Activated T-helper 1 cell treated with anti-CD3 and anti-CD28 coated beads, Interleukin-12 subunit alpha, Interleukin-12 subunit beta, Interleukin-2, Interleukin-4 antibody, amounts not matched to agents 30 ng/mL and 10 ng/mL and 1 ng/mL, durations not matched to agents 14 hours and 24 hours and 36 hours (primary cell): ENCODE measurements at regions of chr4 and their contacts with region 1.

Region 1: DNA sequence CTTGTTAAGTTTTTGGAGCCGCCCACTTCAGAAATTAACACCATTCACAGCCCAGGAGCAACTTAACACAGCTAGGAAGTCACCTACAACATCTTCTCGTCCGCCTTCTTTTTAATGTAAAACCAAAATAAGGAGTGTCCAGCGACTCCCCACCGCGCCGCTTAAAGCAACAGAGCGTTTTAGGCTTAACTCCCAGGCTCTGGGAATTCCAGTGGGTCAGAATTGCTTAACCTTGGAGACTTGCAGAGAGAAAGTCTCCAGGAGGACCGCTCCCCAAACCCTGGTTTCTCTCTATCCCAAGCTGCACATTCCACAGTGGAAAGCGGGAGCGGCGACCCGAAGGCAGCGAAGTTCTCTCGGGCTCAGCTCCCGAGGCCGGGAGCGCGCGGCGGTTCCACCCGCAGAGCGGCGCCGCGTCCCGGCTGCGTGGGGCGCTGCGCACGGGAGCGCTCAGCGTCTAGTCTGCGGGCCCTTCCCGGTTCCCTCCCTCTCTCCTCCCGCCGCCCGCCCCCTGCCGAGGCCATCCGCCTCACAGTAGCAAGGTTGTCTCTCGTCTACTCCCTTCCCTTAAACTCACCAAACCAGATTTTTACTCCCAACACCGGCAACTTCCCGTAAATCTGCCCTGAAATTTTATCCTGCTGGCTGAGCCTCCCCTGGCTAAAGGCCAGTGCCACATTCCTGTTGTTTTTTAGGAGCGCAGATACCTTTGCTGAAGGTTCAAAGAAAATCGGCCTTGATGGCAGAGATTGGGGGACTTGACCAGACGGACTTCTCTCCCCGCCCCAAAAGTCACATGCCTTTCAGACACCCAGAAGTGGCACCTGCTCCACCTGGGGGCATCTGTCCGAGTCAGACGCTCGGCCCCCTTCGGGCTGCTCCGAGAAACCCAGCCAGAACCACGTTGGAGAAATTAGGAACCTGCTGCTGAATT is at the start of gene RBM47:
- DNase-seq: peak; percentile 12
- H3K4me3 Mint-ChIP-seq: peak within 1 kb of the TSS; percentile 92
- H3K27ac Mint-ChIP-seq: peak within 1 kb of the TSS; percentile 84
- H3K4me1 Mint-ChIP-seq: peaks cover 41% of the 10 kb centered on the region
- H3K27me3 Mint-ChIP-seq: peaks cover 2% of the 10 kb centered on the region
- total RNA-seq, gene RBM47: 20.3 and 21.4 TPM in 2 replicates

Region 2: DNA sequence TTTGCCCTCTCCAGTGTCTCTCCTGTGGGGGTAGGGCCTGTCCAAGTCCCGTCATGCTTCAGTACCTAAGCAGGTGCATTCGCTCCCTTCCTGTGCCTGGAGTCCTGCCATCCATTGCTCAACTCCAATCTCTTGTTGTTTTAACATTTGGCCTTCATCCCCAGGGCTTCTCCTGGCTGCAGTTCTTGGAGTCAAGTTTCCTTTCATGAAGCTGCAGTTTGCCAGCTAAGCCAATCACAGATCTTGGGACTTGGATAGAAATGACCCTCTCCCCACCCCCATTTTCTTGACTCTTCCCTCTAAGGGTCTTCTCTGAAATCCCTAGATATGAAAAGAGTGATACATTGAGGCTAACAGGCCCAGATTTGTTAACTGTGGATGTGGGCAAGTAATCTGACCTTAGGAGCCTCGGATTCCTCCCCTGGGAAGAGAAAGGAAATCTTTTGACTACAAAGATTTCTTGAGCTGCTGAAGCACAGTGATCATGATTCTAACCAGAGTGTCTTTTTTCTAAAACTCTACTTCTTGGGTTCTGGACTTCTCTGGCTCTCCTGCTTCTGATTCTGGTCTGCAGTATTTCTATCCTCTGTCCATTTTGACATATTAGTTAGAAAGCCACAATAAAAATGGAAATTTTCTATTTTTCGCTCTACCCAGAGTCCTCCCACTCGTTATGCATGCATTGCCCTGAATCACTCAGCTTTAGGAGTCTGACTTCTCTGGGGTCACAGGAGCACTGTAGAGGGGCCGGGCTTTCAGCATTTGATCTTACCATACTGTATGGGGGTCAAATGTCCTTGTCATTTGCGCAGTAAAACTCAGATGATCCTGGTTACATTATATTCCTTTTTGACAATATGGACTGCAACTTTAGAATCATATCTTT is 233.5 kb before region 1 on chr4:
- intact Hi-C with region 1: no loop called
- DNase-seq: no peak
- H3K4me3 Mint-ChIP-seq: no peak overlapping the region
- H3K27ac Mint-ChIP-seq: no peak overlapping the region
- H3K4me1 Mint-ChIP-seq: no peaks in the 10 kb centered on the region
- H3K27me3 Mint-ChIP-seq: peaks cover 9% of the 10 kb centered on the region

Region 3: DNA sequence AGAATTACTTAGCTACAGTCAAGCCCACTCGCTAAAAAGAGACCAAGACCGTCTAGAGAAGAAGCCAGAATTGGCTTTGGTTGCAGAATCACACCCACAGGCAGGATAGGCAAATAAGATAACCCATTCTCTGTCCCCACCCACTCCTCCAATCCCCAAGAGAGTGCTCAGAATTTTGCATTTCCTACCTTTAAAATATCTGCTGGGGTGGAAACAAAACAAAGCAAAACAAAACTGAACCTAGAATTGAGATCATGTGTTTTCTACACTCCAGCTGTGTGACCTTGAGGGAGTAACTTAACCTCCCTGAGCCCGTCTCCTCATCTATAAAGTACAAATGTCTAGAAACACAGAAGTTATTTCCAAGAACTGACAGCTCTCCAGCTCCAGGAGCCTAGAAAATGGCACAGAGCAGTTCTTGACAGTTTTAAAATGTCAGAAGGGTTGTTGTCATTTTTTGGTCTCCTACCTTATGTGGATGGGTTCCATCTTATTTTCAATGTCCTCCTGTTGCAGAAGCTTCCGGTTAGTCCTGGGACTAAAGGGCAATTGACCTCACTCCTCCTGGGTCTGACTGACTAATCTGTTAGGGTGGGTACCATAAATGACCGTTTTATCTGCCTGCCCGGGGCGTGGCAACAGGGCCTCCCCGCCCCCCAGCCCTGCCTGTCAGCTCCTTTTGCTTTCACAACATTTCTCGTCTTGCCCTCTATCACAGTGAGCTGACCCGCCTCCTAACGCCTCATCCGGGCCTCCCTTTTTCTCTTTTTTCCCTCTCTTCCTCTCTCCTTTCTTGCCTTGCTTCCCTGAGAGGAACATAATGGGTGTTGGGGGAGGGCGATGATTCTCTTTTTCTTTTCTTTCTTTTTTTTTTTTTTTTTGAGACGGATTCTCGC is 114.0 kb before region 1 on chr4:
- intact Hi-C with region 1: loop called (anchors 5 kb)
- DNase-seq: no peak
- H3K4me3 Mint-ChIP-seq: no peak overlapping the region
- H3K27ac Mint-ChIP-seq: peak overlapping the region; percentile 74
- H3K4me1 Mint-ChIP-seq: peaks cover 42% of the 10 kb centered on the region
- H3K27me3 Mint-ChIP-seq: peaks cover 3% of the 10 kb centered on the region

Region 4: GRCh38 chr4:40576631-40577480 is 52.8 kb before region 1 on chr4:
- intact Hi-C with region 1: loop called (anchors 1 kb)
- DNase-seq: no peak
- H3K4me3 Mint-ChIP-seq: peak overlapping the region; percentile 35
- H3K27ac Mint-ChIP-seq: peak overlapping the region; percentile 74
- H3K4me1 Mint-ChIP-seq: peaks cover 57% of the 10 kb centered on the region
- H3K27me3 Mint-ChIP-seq: peaks cover 2% of the 10 kb centered on the region

Region 5: DNA sequence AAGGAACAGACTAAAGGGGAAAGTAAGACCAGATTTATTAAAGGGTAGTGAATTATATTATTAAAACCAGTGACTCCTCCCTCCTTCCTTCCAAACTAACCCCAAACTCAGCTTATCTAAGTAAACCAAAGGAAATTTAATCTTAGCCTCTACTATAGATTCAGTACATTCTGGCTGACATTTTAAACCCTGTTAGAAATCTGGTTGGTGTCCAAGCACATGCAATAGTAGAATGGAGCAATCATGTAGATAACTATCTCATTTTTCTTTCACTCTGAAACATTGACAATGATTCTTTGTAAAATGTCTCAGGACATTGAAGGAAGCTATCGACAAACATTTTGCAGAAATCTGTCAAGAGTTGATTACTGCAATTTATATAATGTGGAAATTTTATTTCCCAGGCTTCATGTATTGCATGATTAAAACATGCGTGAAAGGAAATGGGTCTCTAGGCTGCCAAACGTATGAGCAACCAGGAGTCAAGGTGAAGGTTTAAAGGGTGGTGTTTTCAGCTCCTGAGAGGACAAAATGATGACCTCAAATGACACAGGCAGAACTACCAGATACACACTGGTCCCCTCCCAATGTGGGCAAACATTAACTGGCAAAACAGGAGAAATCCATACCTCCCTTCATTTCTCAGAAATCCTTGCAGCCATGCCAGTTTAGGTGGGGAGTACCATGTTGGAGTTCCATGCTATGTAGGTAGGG is 58.2 kb after region 1 on chr4:
- intact Hi-C with region 1: loop called (anchors 1 kb)
- DNase-seq: no peak
- H3K4me3 Mint-ChIP-seq: peak overlapping the region; percentile 56
- H3K27ac Mint-ChIP-seq: peak overlapping the region; percentile 97
- H3K4me1 Mint-ChIP-seq: peaks cover 27% of the 10 kb centered on the region
- H3K27me3 Mint-ChIP-seq: peaks cover 2% of the 10 kb centered on the region